ENCODE measurements at regions of chr18 and their contacts with region 1.

Region 1: GRCh38 chr18:23864624-23865023 is 149.9 kb upstream of the TTC39C start:
- DNase-seq: peak; percentile 61
- H3K4me3 Mint-ChIP-seq: no peak overlapping the region
- H3K27ac Mint-ChIP-seq: peak overlapping the region; percentile 79
- H3K4me1 Mint-ChIP-seq: peaks cover 51% of the 10 kb centered on the region
- H3K27me3 Mint-ChIP-seq: no peaks in the 10 kb centered on the region

Region 2: GRCh38 chr18:23812546-23813440 is 51.8 kb before region 1 on chr18:
- CTCF ChIA-PET with region 1: no interaction called
- intact Hi-C with region 1: no loop called
- DNase-seq: no peak
- H3K4me3 Mint-ChIP-seq: no peak overlapping the region
- H3K27ac Mint-ChIP-seq: no peak overlapping the region
- H3K4me1 Mint-ChIP-seq: peaks cover 21% of the 10 kb centered on the region
- H3K27me3 Mint-ChIP-seq: no peaks in the 10 kb centered on the region

Region 3: GRCh38 chr18:23828426-23828825 is 36.2 kb before region 1 on chr18:
- CTCF ChIA-PET with region 1: no interaction called
- intact Hi-C with region 1: loop called (anchors 2 kb)
- DNase-seq: peak; percentile 61
- H3K4me3 Mint-ChIP-seq: no peak overlapping the region
- H3K27ac Mint-ChIP-seq: no peak overlapping the region
- H3K4me1 Mint-ChIP-seq: peaks cover 37% of the 10 kb centered on the region
- H3K27me3 Mint-ChIP-seq: no peaks in the 10 kb centered on the region

Region 4: DNA sequence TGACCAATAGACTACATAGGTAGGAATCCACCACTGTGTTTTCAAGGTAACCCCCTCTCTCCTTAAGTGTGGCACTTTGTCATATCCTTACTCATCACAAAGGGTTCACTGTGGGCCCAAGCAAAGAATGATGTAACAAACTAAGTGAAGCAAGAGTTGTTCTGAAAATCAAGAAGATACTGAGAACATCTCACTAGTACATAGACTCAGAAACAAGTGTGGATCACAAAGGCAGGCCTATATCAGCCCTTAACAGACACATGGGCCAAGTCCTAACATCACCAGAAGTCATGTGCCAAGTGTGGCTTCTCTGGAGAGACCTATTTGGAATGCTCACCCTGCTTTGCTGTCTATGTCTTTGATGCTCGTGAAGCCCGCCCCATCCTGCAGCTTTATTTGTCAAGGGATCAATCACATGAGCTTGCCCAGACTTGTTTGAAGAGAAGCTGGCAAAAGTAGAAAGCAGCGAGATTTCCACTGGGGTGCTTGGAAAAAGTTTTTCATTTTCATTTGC is 18.7 kb after region 1 on chr18:
- CTCF ChIA-PET with region 1: no interaction called
- intact Hi-C with region 1: loop called (anchors 2 kb)
- DNase-seq: peak; percentile 15
- H3K4me3 Mint-ChIP-seq: no peak overlapping the region
- H3K27ac Mint-ChIP-seq: peak overlapping the region; percentile 13
- H3K4me1 Mint-ChIP-seq: peaks cover 30% of the 10 kb centered on the region
- H3K27me3 Mint-ChIP-seq: no peaks in the 10 kb centered on the region

Measured in activated naive CD4-positive, alpha-beta T cell treated with anti-CD3 and anti-CD28 coated beads for 36 hours (primary cell).